Natural killer cell (primary cell): ENCODE measurements at regions of chr22 and their contacts with region 1.

Region 1: GRCh38 chr22:50620593-50621355 is 7.2 kb downstream of the ARSA start:
- DNase-seq: peak; percentile 43 to 97
- ATAC-seq: peak; percentile 81 to 91 (median 84)
- H3K4me3 ChIP-seq: peak overlapping the region; percentile 42
- H3K4me3 Mint-ChIP-seq: peak overlapping the region; percentile 92
- H3K27ac ChIP-seq: peak overlapping the region; percentile 84
- H3K27ac Mint-ChIP-seq: peak overlapping the region; percentile 83 to 90
- H3K4me1 ChIP-seq: peaks cover 36% of the 10 kb centered on the region
- H3K4me1 Mint-ChIP-seq: peaks cover 27 to 35% of the 10 kb centered on the region in 2 donors
- H3K27me3 ChIP-seq: no peaks in the 10 kb centered on the region
- H3K27me3 Mint-ChIP-seq: peaks cover 0 to 3% of the 10 kb centered on the region in 2 donors
- CTCF ChIP-seq: peak; percentile 79

Region 2: DNA sequence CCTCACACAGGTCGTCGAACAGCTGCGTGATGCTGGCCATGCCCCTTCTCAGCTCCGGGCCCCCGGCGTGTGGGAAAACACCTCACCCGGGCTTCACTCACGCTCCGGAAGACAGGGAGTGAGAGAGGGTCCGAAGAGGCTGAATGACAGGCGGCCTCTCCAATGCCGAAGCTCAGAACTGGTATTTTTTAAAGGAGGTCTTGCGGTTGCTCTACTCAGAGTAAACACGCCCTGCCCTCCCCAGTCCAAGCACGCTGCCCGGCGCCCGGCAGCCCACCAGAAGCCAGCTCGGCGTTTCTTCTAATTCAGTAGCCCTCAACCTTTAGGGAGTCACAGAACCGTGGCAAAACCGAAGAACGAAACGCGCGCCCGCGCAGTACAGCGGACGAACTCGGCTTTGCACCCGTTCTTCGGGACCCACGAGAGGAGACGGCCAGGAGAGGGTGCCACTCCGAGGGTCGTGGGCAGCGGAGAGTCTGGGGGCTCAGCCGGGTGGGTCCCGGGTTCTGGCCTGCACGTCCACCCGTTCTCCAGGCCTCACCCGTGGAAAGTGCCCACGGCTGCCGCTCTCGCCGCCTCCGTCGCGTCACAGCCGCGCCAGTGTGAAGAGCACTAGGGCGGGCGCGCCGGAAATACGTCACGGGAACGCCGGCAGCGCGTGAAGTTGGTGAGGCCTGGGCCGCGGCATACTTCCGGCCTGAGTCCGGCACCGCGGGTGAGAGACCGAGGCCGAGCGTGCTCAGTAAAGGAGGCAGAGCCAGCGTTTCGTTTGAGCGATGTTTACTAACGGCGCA is 376.2 kb before region 1 on chr22 and contains the start of gene TUBGCP6:
- intact Hi-C with region 1: loop called (anchors 1 kb)
- DNase-seq: peak; percentile 94 to 96
- ATAC-seq: peak; percentile 78 to 91 (median 81)
- H3K4me3 ChIP-seq: peak within 1 kb of the TSS; percentile 66
- H3K4me3 Mint-ChIP-seq: peak within 1 kb of the TSS; percentile 99
- H3K27ac ChIP-seq: peak within 1 kb of the TSS; percentile 87
- H3K27ac Mint-ChIP-seq: peak within 1 kb of the TSS; percentile 96 to 98
- H3K4me1 ChIP-seq: peaks cover 73% of the 10 kb centered on the region
- H3K4me1 Mint-ChIP-seq: peaks cover 23 to 34% of the 10 kb centered on the region in 2 donors
- H3K27me3 ChIP-seq: no peaks in the 10 kb centered on the region
- H3K27me3 Mint-ChIP-seq: no peaks in the 10 kb centered on the region
- CTCF ChIP-seq: no peak
- total RNA-seq, gene TUBGCP6: 105 to 126 (median 118) TPM

Region 3: GRCh38 chr22:50582562-50583293 is 38.0 kb before region 1 on chr22 and contains the start of gene CHKB:
- intact Hi-C with region 1: loop called (anchors 5 kb)
- DNase-seq: peak; percentile 98
- ATAC-seq: peak; percentile 93 to 99 (median 93)
- H3K4me3 ChIP-seq: peak within 1 kb of the TSS; percentile 82
- H3K4me3 Mint-ChIP-seq: peak within 1 kb of the TSS; percentile 91
- H3K27ac ChIP-seq: peak within 1 kb of the TSS; percentile 92
- H3K27ac Mint-ChIP-seq: peak within 1 kb of the TSS; percentile 88 to 94
- H3K4me1 ChIP-seq: peaks cover 33% of the 10 kb centered on the region
- H3K4me1 Mint-ChIP-seq: peaks cover 0 to 24% of the 10 kb centered on the region in 2 donors
- H3K27me3 ChIP-seq: no peaks in the 10 kb centered on the region
- H3K27me3 Mint-ChIP-seq: no peaks in the 10 kb centered on the region
- CTCF ChIP-seq: no peak
- total RNA-seq, gene CHKB: 166 to 204 (median 180) TPM